OCI-LY7 (cell line): ENCODE measurements at regions of chr11 and their contacts with region 1.

Region 1: GRCh38 chr11:95150946-95151684 is 61.5 kb downstream of the ENDOD1 start:
- DNase-seq: peak; percentile 92
- H3K4me3 ChIP-seq: peak overlapping the region; percentile 33
- H3K27ac ChIP-seq: no peak overlapping the region
- H3K4me1 ChIP-seq: peaks cover 26% of the 10 kb centered on the region
- CTCF ChIP-seq: peak; percentile 79

Region 2: DNA sequence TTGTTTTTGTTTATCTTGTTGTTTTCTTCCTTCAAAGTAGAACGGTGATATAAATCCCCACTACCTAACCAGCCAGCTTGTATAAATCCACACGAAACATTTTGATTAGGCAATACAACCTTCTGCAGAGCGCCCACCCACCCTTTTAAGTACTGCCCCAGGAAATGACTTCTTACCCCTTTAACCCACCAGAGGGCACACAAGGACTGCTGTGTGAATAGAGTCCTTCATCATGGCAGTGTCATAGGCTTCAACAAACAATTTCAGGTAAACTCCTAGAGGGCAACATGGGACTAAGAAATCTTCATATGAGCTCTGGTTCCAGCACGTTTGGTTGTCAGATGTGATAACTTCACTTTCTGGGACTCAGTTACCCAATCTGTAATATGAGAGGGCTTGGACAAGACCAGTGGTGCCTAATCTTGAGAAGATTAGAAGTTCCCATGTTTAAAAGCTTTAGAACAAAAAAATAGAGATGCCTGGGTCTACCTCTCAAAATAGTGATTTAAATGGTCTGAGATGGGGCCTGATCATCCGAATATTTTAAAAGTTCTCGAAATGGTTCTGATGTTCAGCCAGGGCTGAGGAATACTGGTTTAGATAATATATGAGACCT is 527.9 kb before region 1 on chr11:
- CTCF ChIA-PET with region 1: no interaction called
- POLR2A ChIA-PET with region 1: no interaction called
- intact Hi-C with region 1: loop called (anchors 5 kb)
- DNase-seq: peak; percentile 63
- H3K4me3 ChIP-seq: no peak overlapping the region
- H3K27ac ChIP-seq: no peak overlapping the region
- H3K4me1 ChIP-seq: no peaks in the 10 kb centered on the region
- CTCF ChIP-seq: peak; percentile 79

Region 3: GRCh38 chr11:95256321-95256779 is 105.2 kb after region 1 on chr11:
- CTCF ChIA-PET with region 1: no interaction called
- POLR2A ChIA-PET with region 1: no interaction called
- intact Hi-C with region 1: no loop called
- DNase-seq: peak; percentile 80
- H3K4me3 ChIP-seq: peak overlapping the region; percentile 45
- H3K27ac ChIP-seq: peak overlapping the region; percentile 85
- H3K4me1 ChIP-seq: peaks cover 57% of the 10 kb centered on the region
- CTCF ChIP-seq: no peak

Region 4: DNA sequence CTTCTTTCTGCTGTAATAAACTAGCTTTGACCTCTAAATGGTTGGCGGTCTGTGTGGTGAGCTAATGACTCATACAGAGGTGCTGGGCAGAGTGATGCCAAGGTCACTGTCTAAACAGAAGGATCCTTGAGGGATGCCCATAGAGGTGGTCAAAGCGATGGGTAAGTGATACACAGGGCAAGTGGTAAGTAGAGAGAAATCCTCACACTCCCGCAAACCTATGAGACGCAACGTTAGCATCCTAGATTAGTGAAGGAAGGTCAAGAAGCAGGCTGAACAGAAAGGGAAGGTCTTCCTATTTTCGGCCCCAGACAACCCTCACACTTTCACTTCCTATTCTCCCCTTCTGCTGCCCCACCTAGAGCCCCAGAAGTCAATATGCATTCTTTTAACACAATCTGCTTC is 145.5 kb after region 1 on chr11:
- CTCF ChIA-PET with region 1: interaction called, 4 read pairs
- POLR2A ChIA-PET with region 1: interaction called, 4 read pairs
- intact Hi-C with region 1: loop called (anchors 5 kb)
- DNase-seq: peak; percentile 75
- H3K4me3 ChIP-seq: peak overlapping the region; percentile 38
- H3K27ac ChIP-seq: peak overlapping the region; percentile 5
- H3K4me1 ChIP-seq: peaks cover 24% of the 10 kb centered on the region
- CTCF ChIP-seq: no peak

Region 5: DNA sequence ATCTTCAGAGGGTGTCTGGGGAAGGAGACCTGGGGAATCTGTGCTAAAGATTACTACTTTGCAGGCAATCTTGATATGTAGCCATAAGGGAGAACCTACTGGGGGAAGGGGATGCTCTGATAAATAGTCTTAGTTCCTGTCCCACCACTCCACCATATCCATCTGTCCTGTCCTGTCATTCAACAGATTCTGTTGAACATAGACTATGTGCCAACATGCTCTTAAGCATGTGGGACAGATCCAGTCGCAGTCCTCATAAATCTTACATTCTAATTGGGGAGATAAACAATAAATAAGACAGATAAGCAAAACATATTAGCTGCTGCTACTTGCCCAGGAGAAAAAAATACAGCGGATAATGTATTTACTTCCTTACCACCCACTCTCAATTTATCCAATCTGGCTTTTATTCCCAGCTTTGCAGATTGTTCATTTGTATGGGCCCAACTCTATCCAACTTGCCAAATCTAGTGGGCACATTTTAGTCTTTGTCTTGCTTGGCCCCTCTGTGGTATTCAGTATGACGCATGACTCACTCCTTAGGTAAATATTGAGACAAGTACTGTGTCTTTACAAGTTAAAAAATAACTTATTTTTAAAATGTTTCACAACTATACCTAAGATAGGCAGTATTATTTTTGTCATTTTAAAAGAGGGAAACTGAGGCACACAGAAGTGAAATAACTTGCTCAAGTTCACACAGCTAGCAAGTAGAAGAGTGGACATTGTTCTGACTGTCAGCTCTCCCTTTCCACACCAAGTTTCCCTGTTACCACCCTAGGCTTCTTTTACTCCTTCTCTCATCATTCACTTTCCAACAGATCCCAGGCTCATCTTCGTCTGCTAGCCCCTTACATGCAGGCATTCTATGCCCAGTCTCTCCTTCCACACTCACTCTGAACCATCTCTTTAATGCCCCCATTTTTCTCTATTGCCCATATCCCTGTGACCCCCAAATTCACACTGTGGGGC is 213.5 kb after region 1 on chr11:
- CTCF ChIA-PET with region 1: no interaction called
- POLR2A ChIA-PET with region 1: no interaction called
- intact Hi-C with region 1: loop called (anchors 5 kb)
- DNase-seq: no peak
- H3K4me3 ChIP-seq: no peak overlapping the region
- H3K27ac ChIP-seq: no peak overlapping the region
- H3K4me1 ChIP-seq: no peaks in the 10 kb centered on the region
- CTCF ChIP-seq: no peak

Region 6: GRCh38 chr11:95705485-95706124 is 554.5 kb after region 1 on chr11:
- CTCF ChIA-PET with region 1: interaction called, 11 read pairs
- POLR2A ChIA-PET with region 1: interaction called, 4 read pairs
- intact Hi-C with region 1: loop called (anchors 1 kb)
- DNase-seq: peak; percentile 76
- H3K4me3 ChIP-seq: no peak overlapping the region
- H3K27ac ChIP-seq: no peak overlapping the region
- H3K4me1 ChIP-seq: peaks cover 6% of the 10 kb centered on the region
- CTCF ChIP-seq: peak; percentile 98

Region 7: GRCh38 chr11:95764267-95764898 is 613.3 kb after region 1 on chr11:
- CTCF ChIA-PET with region 1: interaction called, 3 read pairs
- POLR2A ChIA-PET with region 1: interaction called, 3 read pairs
- intact Hi-C with region 1: loop called (anchors 1 kb)
- DNase-seq: peak; percentile 67
- H3K4me3 ChIP-seq: no peak overlapping the region
- H3K27ac ChIP-seq: no peak overlapping the region
- H3K4me1 ChIP-seq: no peaks in the 10 kb centered on the region
- CTCF ChIP-seq: peak; percentile 90

Region 8: DNA sequence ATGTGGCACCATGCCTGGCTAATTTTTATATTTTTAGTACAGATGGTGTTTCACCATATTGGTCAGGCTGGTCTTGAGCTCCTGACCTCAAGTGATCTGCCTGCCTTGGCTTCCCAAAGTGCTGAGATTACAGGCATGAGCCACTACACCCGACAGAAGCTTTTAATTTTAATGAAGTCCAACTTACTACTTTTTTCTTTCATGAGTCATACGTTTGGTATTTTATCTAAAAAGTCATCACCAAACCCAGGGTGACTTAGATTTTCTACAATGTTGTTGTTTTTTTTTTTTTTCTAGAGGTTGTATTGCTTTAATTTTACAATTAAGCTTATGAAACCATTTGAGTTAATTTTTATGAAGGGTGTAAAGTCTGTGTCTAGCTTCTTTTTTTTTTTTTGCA is 1273.6 kb after region 1 on chr11:
- CTCF ChIA-PET with region 1: no interaction called
- POLR2A ChIA-PET with region 1: no interaction called
- intact Hi-C with region 1: loop called (anchors 5 kb)
- DNase-seq: no peak
- H3K4me3 ChIP-seq: no peak overlapping the region
- H3K27ac ChIP-seq: no peak overlapping the region
- H3K4me1 ChIP-seq: no peaks in the 10 kb centered on the region
- CTCF ChIP-seq: no peak